Activated CD8-positive, alpha-beta T cell treated with anti-CD3 and anti-CD28 coated beads, Interleukin-2, amount 10 ng/mL, durations not matched to agents 7 days and 5 days (primary cell): ENCODE measurements at regions of chr3 and their contacts with region 1.

Region 1: GRCh38 chr3:45656575-45657363 is 32.4 kb upstream of the SACM1L start:
- DNase-seq: peak; percentile 92
- ATAC-seq: peak; percentile 95
- H3K4me3 Mint-ChIP-seq: no peak overlapping the region
- H3K27ac Mint-ChIP-seq: no peak overlapping the region
- H3K4me1 Mint-ChIP-seq: peaks cover 14% of the 10 kb centered on the region
- H3K27me3 Mint-ChIP-seq: no peaks in the 10 kb centered on the region

Region 2: GRCh38 chr3:45043728-45044299 is 613.0 kb before region 1 on chr3:
- CTCF ChIA-PET with region 1: interaction called, 28 read pairs
- POLR2A ChIA-PET with region 1: no interaction called
- DNase-seq: no peak
- ATAC-seq: no peak
- H3K4me3 Mint-ChIP-seq: no peak overlapping the region
- H3K27ac Mint-ChIP-seq: no peak overlapping the region
- H3K4me1 Mint-ChIP-seq: peaks cover 31% of the 10 kb centered on the region
- H3K27me3 Mint-ChIP-seq: peaks cover 30% of the 10 kb centered on the region

Region 3: DNA sequence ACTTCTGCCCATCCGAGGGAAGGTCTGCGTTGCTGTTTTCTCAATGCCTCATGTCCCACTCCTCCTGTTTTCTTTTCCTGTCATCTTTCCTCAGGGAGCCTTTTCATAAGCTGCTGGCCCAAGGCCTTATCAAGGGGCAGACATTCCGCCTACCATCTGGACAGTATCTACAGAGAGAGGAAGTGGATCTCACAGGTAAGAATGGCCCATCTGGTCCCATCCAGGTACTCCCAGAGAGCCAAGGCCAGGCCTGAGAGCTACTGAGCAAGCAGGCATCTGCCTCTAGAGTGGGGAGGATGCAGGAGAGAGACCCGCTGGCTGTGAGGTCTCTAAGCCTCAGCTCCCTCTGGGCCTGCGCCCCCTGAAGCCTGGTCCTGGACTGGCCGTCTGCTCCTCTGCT is 143.7 kb before region 1 on chr3:
- CTCF ChIA-PET with region 1: interaction called, 116 read pairs
- POLR2A ChIA-PET with region 1: interaction called, 4 read pairs
- DNase-seq: no peak
- ATAC-seq: no peak
- H3K4me3 Mint-ChIP-seq: no peak overlapping the region
- H3K27ac Mint-ChIP-seq: no peak overlapping the region
- H3K4me1 Mint-ChIP-seq: no peaks in the 10 kb centered on the region
- H3K27me3 Mint-ChIP-seq: no peaks in the 10 kb centered on the region

Region 4: GRCh38 chr3:45593708-45594609 is 62.8 kb before region 1 on chr3:
- CTCF ChIA-PET with region 1: interaction called, 20 read pairs
- POLR2A ChIA-PET with region 1: no interaction called
- DNase-seq: peak; percentile 80
- ATAC-seq: peak; percentile 90
- H3K4me3 Mint-ChIP-seq: peak overlapping the region; percentile 77
- H3K27ac Mint-ChIP-seq: peak overlapping the region; percentile 89
- H3K4me1 Mint-ChIP-seq: peaks cover 56% of the 10 kb centered on the region
- H3K27me3 Mint-ChIP-seq: peaks cover 2% of the 10 kb centered on the region

Region 5: GRCh38 chr3:45628746-45629145 is 28.0 kb before region 1 on chr3:
- CTCF ChIA-PET with region 1: interaction called, 14 read pairs
- POLR2A ChIA-PET with region 1: no interaction called
- DNase-seq: no peak
- ATAC-seq: no peak
- H3K4me3 Mint-ChIP-seq: no peak overlapping the region
- H3K27ac Mint-ChIP-seq: peak overlapping the region; percentile 0
- H3K4me1 Mint-ChIP-seq: peaks cover 35% of the 10 kb centered on the region
- H3K27me3 Mint-ChIP-seq: no peaks in the 10 kb centered on the region

Region 6: GRCh38 chr3:45670991-45671390 is 14.2 kb after region 1 on chr3:
- CTCF ChIA-PET with region 1: interaction called, 48 read pairs
- POLR2A ChIA-PET with region 1: no interaction called
- DNase-seq: no peak
- ATAC-seq: no peak
- H3K4me3 Mint-ChIP-seq: no peak overlapping the region
- H3K27ac Mint-ChIP-seq: no peak overlapping the region
- H3K4me1 Mint-ChIP-seq: peaks cover 43% of the 10 kb centered on the region
- H3K27me3 Mint-ChIP-seq: no peaks in the 10 kb centered on the region

Region 7: GRCh38 chr3:45688882-45689756 is 32.4 kb after region 1 on chr3 and contains the start of gene SACM1L:
- CTCF ChIA-PET with region 1: interaction called, 52 read pairs
- POLR2A ChIA-PET with region 1: no interaction called
- DNase-seq: peak; percentile 98
- ATAC-seq: peak; percentile 86
- H3K4me3 Mint-ChIP-seq: peak within 1 kb of the TSS; percentile 85
- H3K27ac Mint-ChIP-seq: peak within 1 kb of the TSS; percentile 90
- H3K4me1 Mint-ChIP-seq: peaks cover 46% of the 10 kb centered on the region
- H3K27me3 Mint-ChIP-seq: peaks cover 3% of the 10 kb centered on the region
- total RNA-seq, gene SACM1L: 89.8 to 96.4 TPM